MCF 10A (cell line): ENCODE measurements at regions of chr6 and their contacts with region 1.

Region 1: GRCh38 chr6:116531675-116532570 is 13.6 kb downstream of the TRAPPC3L start:
- DNase-seq: peak; percentile 72
- H3K4me3 Mint-ChIP-seq: no peak overlapping the region
- H3K27ac Mint-ChIP-seq: no peak overlapping the region
- H3K4me1 Mint-ChIP-seq: peaks cover 19% of the 10 kb centered on the region
- H3K27me3 Mint-ChIP-seq: no peaks in the 10 kb centered on the region
- CTCF ChIP-seq: peak; percentile 70

Region 2: GRCh38 chr6:116217069-116217468 is 314.9 kb before region 1 on chr6:
- CTCF ChIA-PET with region 1: interaction called, 5 read pairs
- POLR2A ChIA-PET with region 1: no interaction called
- intact Hi-C with region 1: loop called (anchors 5 kb)
- DNase-seq: peak; percentile 62
- H3K4me3 Mint-ChIP-seq: no peak overlapping the region
- H3K27ac Mint-ChIP-seq: no peak overlapping the region
- H3K4me1 Mint-ChIP-seq: no peaks in the 10 kb centered on the region
- H3K27me3 Mint-ChIP-seq: no peaks in the 10 kb centered on the region
- CTCF ChIP-seq: peak; percentile 63

Region 3: DNA sequence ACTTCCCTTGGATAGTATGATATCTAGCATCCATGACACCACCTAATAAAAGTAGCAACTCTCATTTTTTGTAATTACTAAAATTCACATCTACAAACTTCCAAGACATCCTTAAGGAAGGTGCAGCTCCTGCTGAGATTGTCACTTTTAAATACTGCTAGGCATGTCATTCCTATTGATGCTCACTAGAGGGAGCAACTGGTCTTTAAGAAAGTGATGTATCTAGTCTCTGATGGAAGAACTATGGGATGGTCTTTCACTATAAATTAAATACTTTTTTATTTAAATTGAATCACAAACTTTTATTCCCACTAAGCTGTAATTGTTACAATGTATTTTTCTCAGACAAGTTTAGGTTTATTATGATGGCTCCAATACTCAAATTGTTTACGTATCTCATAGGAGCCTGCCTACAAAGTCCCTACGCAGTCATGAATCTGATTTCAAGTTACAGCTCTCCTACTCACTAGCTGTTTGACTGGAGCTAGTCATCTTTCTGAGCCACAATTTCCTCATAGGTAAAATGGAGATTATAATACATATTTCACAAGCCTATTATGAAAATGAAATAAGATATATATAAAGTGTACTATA is 244.1 kb before region 1 on chr6:
- CTCF ChIA-PET with region 1: interaction called, 82 read pairs
- POLR2A ChIA-PET with region 1: interaction called, 7 read pairs
- intact Hi-C with region 1: loop called (anchors 1 kb)
- DNase-seq: peak; percentile 69
- H3K4me3 Mint-ChIP-seq: no peak overlapping the region
- H3K27ac Mint-ChIP-seq: no peak overlapping the region
- H3K4me1 Mint-ChIP-seq: no peaks in the 10 kb centered on the region
- H3K27me3 Mint-ChIP-seq: no peaks in the 10 kb centered on the region
- CTCF ChIP-seq: peak; percentile 83

Region 4: GRCh38 chr6:116444092-116444491 is 87.8 kb before region 1 on chr6:
- CTCF ChIA-PET with region 1: interaction called, 12 read pairs
- POLR2A ChIA-PET with region 1: no interaction called
- intact Hi-C with region 1: loop called (anchors 1 kb)
- DNase-seq: peak; percentile 53
- H3K4me3 Mint-ChIP-seq: no peak overlapping the region
- H3K27ac Mint-ChIP-seq: peak overlapping the region; percentile 37
- H3K4me1 Mint-ChIP-seq: peaks cover 24% of the 10 kb centered on the region
- H3K27me3 Mint-ChIP-seq: no peaks in the 10 kb centered on the region
- CTCF ChIP-seq: peak; percentile 54

Region 5: GRCh38 chr6:116518621-116519368 is 13.1 kb before region 1 on chr6:
- CTCF ChIA-PET with region 1: interaction called, 24 read pairs
- POLR2A ChIA-PET with region 1: no interaction called
- intact Hi-C with region 1: no loop called
- DNase-seq: no peak
- H3K4me3 Mint-ChIP-seq: no peak overlapping the region
- H3K27ac Mint-ChIP-seq: no peak overlapping the region
- H3K4me1 Mint-ChIP-seq: no peaks in the 10 kb centered on the region
- H3K27me3 Mint-ChIP-seq: no peaks in the 10 kb centered on the region
- CTCF ChIP-seq: no peak

Region 6: DNA sequence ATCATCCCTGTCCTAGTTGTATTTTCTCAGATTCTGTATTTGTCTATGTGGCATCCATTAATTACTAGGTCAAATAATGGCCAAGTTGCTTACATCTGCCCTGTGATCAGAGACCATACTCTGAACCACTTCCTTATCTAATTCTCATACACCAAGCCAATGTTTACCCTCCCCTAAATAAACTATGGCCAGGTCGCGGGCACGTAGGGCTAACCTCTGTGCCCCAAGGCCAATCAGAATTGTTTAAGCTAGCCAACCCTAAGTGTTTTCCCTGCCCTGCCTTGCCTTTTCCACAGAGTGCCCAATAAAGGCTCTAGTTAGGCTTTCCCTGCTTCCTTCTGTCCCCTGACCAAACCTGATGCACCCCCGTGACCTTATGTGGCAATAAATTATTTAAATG is 18.9 kb after region 1 on chr6:
- CTCF ChIA-PET with region 1: interaction called, 12 read pairs
- POLR2A ChIA-PET with region 1: no interaction called
- intact Hi-C with region 1: no loop called
- DNase-seq: no peak
- H3K4me3 Mint-ChIP-seq: no peak overlapping the region
- H3K27ac Mint-ChIP-seq: no peak overlapping the region
- H3K4me1 Mint-ChIP-seq: peaks cover 2% of the 10 kb centered on the region
- H3K27me3 Mint-ChIP-seq: no peaks in the 10 kb centered on the region
- CTCF ChIP-seq: no peak

Region 7: GRCh38 chr6:116570856-116571682 is 39.1 kb after region 1 on chr6 and contains the start of gene RWDD1:
- CTCF ChIA-PET with region 1: interaction called, 12 read pairs
- POLR2A ChIA-PET with region 1: interaction called, 5 read pairs
- intact Hi-C with region 1: no loop called
- DNase-seq: peak; percentile 98
- H3K4me3 Mint-ChIP-seq: peak within 1 kb of the TSS; percentile 98
- H3K27ac Mint-ChIP-seq: peak within 1 kb of the TSS; percentile 98
- H3K4me1 Mint-ChIP-seq: peaks cover 25% of the 10 kb centered on the region
- H3K27me3 Mint-ChIP-seq: no peaks in the 10 kb centered on the region
- CTCF ChIP-seq: no peak
- total RNA-seq, gene RWDD1: 41.6 and 57.2 TPM in 2 replicates